ENCODE measurements at regions of chr2 and their contacts with region 1.

Region 1: GRCh38 chr2:234425619-234426603 is 71.0 kb downstream of the ARL4C start:
- DNase-seq: no peak
- H3K4me3 ChIP-seq: no peak overlapping the region
- H3K4me3 Mint-ChIP-seq: no peak overlapping the region
- H3K27ac Mint-ChIP-seq: peak overlapping the region; percentile 96
- H3K4me1 ChIP-seq: peaks cover 71% of the 10 kb centered on the region
- H3K4me1 Mint-ChIP-seq: peaks cover 34% of the 10 kb centered on the region
- H3K27me3 ChIP-seq: no peaks in the 10 kb centered on the region
- H3K27me3 Mint-ChIP-seq: no peaks in the 10 kb centered on the region
- CTCF ChIP-seq: no peak

Region 2: DNA sequence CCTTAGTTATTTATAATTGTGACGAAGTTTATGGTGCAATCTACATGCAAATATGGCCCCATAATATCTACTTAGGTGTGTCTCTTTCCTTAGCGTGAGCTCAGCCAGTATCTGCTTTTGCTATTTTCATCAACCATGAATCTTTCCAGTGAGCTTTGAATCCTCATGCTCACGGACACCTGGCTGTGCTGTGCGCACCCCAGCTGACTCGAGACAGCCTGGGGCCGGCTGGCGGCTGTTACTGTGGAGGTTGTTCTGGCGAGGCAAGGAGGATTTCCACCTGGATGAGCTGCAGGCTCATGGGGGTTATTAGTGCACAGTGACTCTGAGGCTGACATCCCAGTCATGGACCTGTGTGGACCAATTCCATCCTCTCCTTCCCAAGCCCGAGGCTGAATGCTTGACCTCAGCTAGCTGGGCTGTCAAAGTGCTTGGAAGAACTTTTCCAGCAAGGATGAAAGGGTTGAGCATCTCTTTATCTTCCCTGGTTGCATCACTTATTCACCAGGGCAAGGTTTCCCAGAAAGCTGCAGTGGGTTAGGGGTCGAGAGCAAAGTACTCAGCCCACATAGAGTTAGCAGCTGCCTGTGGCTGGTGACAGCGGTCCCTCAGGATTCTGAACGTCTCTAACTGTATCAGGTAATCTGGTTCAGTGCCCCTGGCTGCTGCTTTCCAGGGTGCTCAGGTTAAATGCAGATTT is 70.7 kb before region 1 on chr2:
- CTCF ChIA-PET with region 1: no interaction called
- POLR2A ChIA-PET with region 1: no interaction called
- intact Hi-C with region 1: no loop called
- DNase-seq: peak; percentile 67 to 85
- H3K4me3 ChIP-seq: no peak overlapping the region
- H3K4me3 Mint-ChIP-seq: no peak overlapping the region
- H3K27ac Mint-ChIP-seq: no peak overlapping the region
- H3K4me1 ChIP-seq: peaks cover 8% of the 10 kb centered on the region
- H3K4me1 Mint-ChIP-seq: peaks cover 14% of the 10 kb centered on the region
- H3K27me3 ChIP-seq: no peaks in the 10 kb centered on the region
- H3K27me3 Mint-ChIP-seq: no peaks in the 10 kb centered on the region
- CTCF ChIP-seq: no peak

Region 3: GRCh38 chr2:234368861-234369261 is 57.0 kb before region 1 on chr2:
- CTCF ChIA-PET with region 1: interaction called, 6 read pairs
- POLR2A ChIA-PET with region 1: no interaction called
- intact Hi-C with region 1: loop called (anchors 1 kb)
- DNase-seq: peak; percentile 61 to 69
- H3K4me3 ChIP-seq: no peak overlapping the region
- H3K4me3 Mint-ChIP-seq: no peak overlapping the region
- H3K27ac Mint-ChIP-seq: peak overlapping the region; percentile 77
- H3K4me1 ChIP-seq: peaks cover 65% of the 10 kb centered on the region
- H3K4me1 Mint-ChIP-seq: peaks cover 47% of the 10 kb centered on the region
- H3K27me3 ChIP-seq: no peaks in the 10 kb centered on the region
- H3K27me3 Mint-ChIP-seq: no peaks in the 10 kb centered on the region
- CTCF ChIP-seq: no peak

Region 4: DNA sequence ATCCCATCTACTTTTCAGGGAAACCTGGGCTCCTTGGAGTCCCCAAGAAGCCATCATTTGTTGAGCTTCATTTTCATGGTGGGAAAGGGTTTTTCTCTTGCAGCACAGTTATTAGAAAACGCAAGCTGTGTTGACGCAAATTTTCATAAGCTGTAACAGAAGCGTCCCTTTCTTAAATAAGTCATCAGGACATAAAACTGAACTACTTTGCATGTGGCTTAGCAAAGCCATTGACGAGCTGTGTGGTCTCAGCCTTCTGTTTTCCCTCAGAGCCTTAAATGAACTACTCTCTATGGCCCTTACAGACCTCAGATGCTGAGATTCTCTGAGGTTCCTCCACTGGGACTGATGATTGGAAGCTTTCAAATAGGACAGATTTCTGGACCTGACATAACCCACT is 14.1 kb before region 1 on chr2:
- CTCF ChIA-PET with region 1: no interaction called
- POLR2A ChIA-PET with region 1: interaction called, 6 read pairs
- intact Hi-C with region 1: loop called (anchors 1 kb)
- DNase-seq: no peak
- H3K4me3 ChIP-seq: no peak overlapping the region
- H3K4me3 Mint-ChIP-seq: no peak overlapping the region
- H3K27ac Mint-ChIP-seq: peak overlapping the region; percentile 94
- H3K4me1 ChIP-seq: peaks cover 44% of the 10 kb centered on the region
- H3K4me1 Mint-ChIP-seq: peaks cover 36% of the 10 kb centered on the region
- H3K27me3 ChIP-seq: no peaks in the 10 kb centered on the region
- H3K27me3 Mint-ChIP-seq: no peaks in the 10 kb centered on the region
- CTCF ChIP-seq: no peak

Region 5: GRCh38 chr2:234446404-234447076 is 20.6 kb after region 1 on chr2:
- CTCF ChIA-PET with region 1: no interaction called
- POLR2A ChIA-PET with region 1: interaction called, 7 read pairs
- intact Hi-C with region 1: loop called (anchors 1 kb)
- DNase-seq: no peak
- H3K4me3 ChIP-seq: no peak overlapping the region
- H3K4me3 Mint-ChIP-seq: no peak overlapping the region
- H3K27ac Mint-ChIP-seq: peak overlapping the region; percentile 89
- H3K4me1 ChIP-seq: peaks cover 39% of the 10 kb centered on the region
- H3K4me1 Mint-ChIP-seq: peaks cover 15% of the 10 kb centered on the region
- H3K27me3 ChIP-seq: no peaks in the 10 kb centered on the region
- H3K27me3 Mint-ChIP-seq: no peaks in the 10 kb centered on the region
- CTCF ChIP-seq: no peak

Region 6: DNA sequence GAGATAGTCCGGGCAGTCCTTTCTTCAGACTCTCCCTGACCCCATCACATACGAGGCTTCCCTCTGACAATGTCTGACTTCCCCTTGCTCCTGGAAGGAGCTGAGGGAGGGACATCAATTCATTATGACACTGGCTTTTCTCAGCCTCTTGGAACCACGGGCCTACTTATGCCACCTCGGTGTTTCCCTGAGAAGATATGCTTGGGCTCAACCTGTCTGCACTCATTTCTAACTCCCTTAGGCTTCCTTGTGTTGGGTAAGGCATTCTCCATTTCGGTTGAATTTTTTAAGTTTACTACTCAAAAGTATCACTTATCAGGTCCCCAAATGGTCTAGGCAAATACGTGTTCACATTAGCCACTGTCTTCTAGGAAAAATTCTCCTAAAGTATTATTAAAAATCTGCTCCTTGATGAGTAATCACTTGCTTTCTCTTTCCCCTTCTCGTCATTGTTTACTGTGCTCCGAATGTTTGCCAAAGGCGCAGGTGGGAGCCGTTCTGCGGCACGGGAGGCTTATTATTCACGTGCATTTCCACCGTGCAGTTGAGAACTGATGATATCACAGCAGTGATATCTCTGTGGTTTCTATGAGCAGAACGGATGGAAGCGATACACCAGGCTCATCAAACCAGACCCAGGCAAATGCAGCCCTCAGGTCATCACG is 37.8 kb after region 1 on chr2:
- CTCF ChIA-PET with region 1: no interaction called
- POLR2A ChIA-PET with region 1: no interaction called
- intact Hi-C with region 1: loop called (anchors 1 kb)
- DNase-seq: peak; percentile 51 to 67
- H3K4me3 ChIP-seq: no peak overlapping the region
- H3K4me3 Mint-ChIP-seq: peak overlapping the region; percentile 47
- H3K27ac Mint-ChIP-seq: peak overlapping the region; percentile 95
- H3K4me1 ChIP-seq: peaks cover 70% of the 10 kb centered on the region
- H3K4me1 Mint-ChIP-seq: peaks cover 33% of the 10 kb centered on the region
- H3K27me3 ChIP-seq: no peaks in the 10 kb centered on the region
- H3K27me3 Mint-ChIP-seq: no peaks in the 10 kb centered on the region
- CTCF ChIP-seq: no peak

Region 7: GRCh38 chr2:234500394-234501006 is 74.6 kb after region 1 on chr2:
- CTCF ChIA-PET with region 1: no interaction called
- POLR2A ChIA-PET with region 1: interaction called, 11 read pairs
- intact Hi-C with region 1: no loop called
- DNase-seq: peak; percentile 56 to 60
- H3K4me3 ChIP-seq: no peak overlapping the region
- H3K4me3 Mint-ChIP-seq: no peak overlapping the region
- H3K27ac Mint-ChIP-seq: no peak overlapping the region
- H3K4me1 ChIP-seq: peaks cover 6% of the 10 kb centered on the region
- H3K4me1 Mint-ChIP-seq: peaks cover 8% of the 10 kb centered on the region
- H3K27me3 ChIP-seq: no peaks in the 10 kb centered on the region
- H3K27me3 Mint-ChIP-seq: no peaks in the 10 kb centered on the region
- CTCF ChIP-seq: peak; percentile 34 to 46